PC-9 (cell line): ENCODE measurements at regions of chr12 and their contacts with region 1.

Region 1: DNA sequence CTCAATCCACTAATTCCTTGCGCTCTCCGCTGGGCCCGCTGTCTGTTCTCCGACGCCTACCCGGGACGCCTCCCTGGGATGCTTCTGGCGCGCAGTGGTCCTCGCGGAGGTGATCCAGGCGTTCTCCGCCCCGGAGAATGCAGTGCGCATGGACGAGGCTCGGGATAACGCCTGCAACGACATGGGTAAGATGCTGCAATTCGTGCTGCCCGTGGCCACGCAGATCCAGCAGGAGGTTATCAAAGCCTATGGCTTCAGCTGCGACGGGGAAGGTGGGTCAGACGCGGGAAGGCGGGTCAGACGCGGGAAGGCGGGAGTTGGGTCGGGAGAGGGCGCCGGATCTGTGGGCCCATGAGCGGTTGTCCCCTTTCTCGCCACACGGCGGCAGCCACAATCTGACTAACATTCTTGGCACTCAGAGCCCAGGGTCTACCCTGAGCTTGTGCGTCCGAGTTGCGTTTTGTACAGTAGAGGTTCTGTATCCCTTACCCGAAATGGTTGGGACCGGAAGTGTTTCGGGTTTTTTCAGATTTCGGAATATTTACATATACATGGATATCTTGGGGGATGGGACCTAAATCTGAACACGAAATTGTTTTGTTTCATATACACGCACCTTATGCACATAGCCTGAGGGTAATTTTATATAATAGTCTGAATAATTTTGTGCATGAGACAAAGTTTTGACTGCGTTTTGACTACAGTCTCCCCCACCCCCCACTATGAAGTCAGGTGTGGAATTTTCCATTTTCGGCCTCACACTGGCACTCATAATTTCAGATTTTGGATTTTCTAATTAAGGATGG is 762 bp downstream of the C12orf57 start:
- DNase-seq: peak; percentile 90 to 97
- H3K4me3 ChIP-seq: peak overlapping the region; percentile 67
- H3K27ac ChIP-seq: peak overlapping the region; percentile 94
- H3K4me1 ChIP-seq: peaks cover 20% of the 10 kb centered on the region
- H3K27me3 ChIP-seq: no peaks in the 10 kb centered on the region
- CTCF ChIP-seq: peak; percentile 88

Region 2: GRCh38 chr12:6104027-6104426 is 840.6 kb before region 1 on chr12:
- CTCF ChIA-PET with region 1: no interaction called
- POLR2A ChIA-PET with region 1: interaction called, 16 read pairs
- intact Hi-C with region 1: no loop called
- DNase-seq: no peak
- H3K4me3 ChIP-seq: no peak overlapping the region
- H3K27ac ChIP-seq: no peak overlapping the region
- H3K4me1 ChIP-seq: no peaks in the 10 kb centered on the region
- H3K27me3 ChIP-seq: no peaks in the 10 kb centered on the region
- CTCF ChIP-seq: no peak

Region 3: DNA sequence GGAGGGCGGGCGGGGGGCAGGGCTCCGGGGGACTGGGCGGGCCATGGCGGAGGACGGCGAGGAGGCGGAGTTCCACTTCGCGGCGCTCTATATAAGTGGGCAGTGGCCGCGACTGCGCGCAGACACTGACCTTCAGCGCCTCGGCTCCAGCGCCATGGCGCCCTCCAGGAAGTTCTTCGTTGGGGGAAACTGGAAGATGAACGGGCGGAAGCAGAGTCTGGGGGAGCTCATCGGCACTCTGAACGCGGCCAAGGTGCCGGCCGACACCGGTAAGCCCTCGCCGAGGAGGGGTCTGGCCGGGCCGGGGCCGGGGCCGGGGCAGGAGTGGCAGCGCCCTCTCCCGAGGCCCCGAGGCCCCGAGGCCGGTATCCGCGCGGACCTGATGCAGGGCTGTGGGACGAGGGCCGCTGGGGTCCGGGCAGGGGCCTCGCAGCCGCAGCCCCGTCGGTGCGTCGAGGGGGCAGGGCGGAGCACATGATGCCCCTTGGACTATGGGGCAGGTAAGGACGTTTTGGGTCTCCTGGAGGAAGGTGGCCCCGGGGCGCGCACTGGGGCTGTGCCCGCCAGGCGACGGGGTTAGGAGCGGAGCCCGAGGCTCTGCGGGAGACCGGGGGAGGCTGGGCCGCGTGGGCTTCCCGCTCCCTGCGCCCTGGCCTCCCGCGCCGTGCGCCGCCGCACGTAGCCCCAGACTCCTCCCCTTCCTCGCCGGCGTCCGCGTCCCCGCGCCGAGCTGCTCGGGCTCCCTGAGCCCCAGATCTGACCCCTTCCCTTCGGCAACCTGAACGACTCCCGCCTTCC is 77.0 kb before region 1 on chr12 and contains the start of gene TPI1:
- CTCF ChIA-PET with region 1: interaction called, 21 read pairs
- POLR2A ChIA-PET with region 1: interaction called, 20 read pairs
- intact Hi-C with region 1: loop called (anchors 1 kb)
- DNase-seq: peak; percentile 46 to 82
- H3K4me3 ChIP-seq: peak within 1 kb of the TSS; percentile 97
- H3K27ac ChIP-seq: peak within 1 kb of the TSS; percentile 72
- H3K4me1 ChIP-seq: peaks cover 32% of the 10 kb centered on the region
- H3K27me3 ChIP-seq: no peaks in the 10 kb centered on the region
- CTCF ChIP-seq: no peak; the same call in 1 of the 2 replicates
- total RNA-seq, gene TPI1: 1,080 and 1,199 TPM in 2 replicates

Region 4: DNA sequence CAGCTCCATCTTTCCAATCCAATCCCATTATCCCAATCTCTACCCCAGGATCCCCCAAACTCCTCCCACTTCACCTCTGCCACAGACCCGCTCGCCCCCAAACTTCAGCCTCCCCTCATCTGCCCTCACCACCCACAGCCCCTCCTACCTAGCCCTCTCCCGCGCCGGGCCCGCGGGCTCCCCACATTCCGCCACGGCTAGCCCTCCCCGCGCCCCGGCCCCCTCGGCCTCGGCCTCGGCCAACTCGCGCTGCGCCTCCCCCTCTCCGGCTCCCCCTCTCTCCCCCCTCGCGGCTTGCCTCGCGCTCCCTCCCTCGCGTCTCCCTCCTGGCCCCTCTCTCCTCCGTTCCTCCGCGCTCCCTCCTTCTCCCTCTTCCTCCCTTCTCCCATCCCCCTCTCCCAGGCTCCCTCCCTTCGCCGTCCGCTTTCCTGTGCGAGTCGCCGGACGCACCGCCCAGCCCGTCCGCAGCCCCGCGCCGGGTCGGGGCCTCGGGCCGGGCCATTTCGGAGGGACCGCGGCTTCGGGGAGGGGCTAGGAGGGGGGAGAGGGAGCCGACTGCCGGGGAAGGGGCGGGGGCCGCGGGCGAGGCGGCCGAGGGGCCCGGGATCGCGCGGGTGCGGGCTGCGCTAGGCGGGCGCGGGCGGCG is 17.1 kb before region 1 on chr12 and contains the start of gene ATN1:
- CTCF ChIA-PET with region 1: interaction called, 38 read pairs
- POLR2A ChIA-PET with region 1: interaction called, 31 read pairs
- intact Hi-C with region 1: loop called (anchors 1 kb)
- DNase-seq: peak in 1 of 2 experiments; percentile 66
- H3K4me3 ChIP-seq: peak within 1 kb of the TSS; percentile 85
- H3K27ac ChIP-seq: peak within 1 kb of the TSS; percentile 75
- H3K4me1 ChIP-seq: peaks cover 53% of the 10 kb centered on the region
- H3K27me3 ChIP-seq: no peaks in the 10 kb centered on the region
- CTCF ChIP-seq: no peak
- total RNA-seq, gene ATN1: 158 and 159 TPM in 2 replicates

Region 5: DNA sequence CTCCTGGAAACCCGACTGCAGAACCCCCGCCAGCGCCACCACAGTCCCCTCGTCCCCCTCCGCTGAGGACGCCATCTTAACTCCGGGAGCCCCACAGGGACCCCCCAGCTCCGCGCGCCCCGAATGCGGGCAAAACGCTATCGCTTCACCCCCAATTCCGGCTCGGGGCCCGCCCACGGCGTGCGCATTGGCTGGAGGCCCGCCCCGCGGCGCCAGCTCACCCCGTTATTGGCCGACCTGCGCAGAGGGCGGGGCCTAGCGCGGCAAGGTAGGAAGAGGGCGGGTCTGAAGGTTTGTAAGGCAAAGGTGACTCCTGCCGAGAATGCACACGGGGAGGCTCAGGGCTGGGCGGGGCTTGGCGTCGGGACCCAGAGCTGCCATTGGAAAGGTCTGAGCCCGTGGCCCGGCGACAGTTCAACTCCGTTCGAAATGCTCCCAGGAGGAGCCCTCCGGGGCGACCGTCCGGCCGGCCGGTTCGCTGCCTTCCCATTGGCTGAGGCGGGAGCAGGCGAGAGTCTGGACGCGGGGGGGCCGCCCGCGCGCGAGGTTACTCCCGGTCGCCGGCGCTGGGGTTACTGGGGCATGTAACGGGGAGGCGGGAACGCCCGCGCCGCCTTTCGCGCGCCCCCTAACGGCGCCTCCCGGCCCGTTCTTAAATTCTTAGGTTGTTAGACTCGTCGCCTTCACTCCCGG is 73.9 kb after region 1 on chr12 and contains the start of gene LPCAT3:
- CTCF ChIA-PET with region 1: interaction called, 9 read pairs
- POLR2A ChIA-PET with region 1: interaction called, 19 read pairs
- intact Hi-C with region 1: loop called (anchors 1 kb)
- DNase-seq: peak; percentile 96 to 100
- H3K4me3 ChIP-seq: peak within 1 kb of the TSS; percentile 79
- H3K27ac ChIP-seq: peak within 1 kb of the TSS; percentile 74
- H3K4me1 ChIP-seq: peaks cover 37% of the 10 kb centered on the region
- H3K27me3 ChIP-seq: no peaks in the 10 kb centered on the region
- CTCF ChIP-seq: peak; percentile 83
- total RNA-seq, gene LPCAT3: 53.8 and 102 TPM in 2 replicates

Region 6: DNA sequence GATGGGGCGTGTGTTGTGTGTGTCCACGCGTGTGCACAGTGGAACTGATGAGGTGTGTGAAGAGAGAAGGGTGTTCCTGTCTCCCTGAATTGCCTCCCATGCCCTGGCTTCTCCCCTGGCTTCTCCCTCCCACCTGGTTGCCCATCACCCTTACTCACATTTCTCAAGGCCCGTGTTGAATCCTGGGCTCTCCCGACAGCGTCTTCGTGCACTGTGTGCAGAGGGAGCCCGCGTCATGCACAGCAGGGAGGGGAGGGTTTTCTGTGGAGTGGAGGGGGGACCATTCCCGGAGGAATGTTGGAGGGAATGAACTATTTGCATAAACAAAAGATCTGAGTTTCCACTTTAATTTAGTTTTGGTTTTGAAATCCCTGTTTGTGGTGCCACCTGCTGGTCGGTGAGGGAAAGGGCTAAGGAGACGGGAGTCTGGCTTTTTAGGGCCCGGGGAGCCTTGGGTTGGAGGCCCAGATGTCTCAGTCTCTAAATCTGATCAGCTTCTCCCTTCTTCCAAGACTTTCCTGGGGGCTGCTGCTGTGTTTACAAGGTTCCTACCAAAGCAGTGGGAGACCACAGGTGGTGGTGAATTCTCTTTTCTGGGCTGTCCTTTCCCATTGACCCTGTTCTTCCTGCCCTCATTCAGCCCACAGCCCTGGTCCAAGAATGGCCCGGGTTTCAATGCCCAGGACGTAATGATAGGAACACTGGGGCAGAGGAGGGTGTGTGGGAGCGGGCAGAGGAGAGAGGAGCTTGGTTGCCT is 147.8 kb after region 1 on chr12 and contains the start of gene C1R:
- CTCF ChIA-PET with region 1: interaction called, 4 read pairs
- POLR2A ChIA-PET with region 1: interaction called, 19 read pairs
- intact Hi-C with region 1: loop called (anchors 1 kb)
- DNase-seq: peak in 1 of 2 experiments; percentile 76
- H3K4me3 ChIP-seq: peak within 1 kb of the TSS; percentile 41; the same call in 1 of the 2 replicates
- H3K27ac ChIP-seq: no peak within 1 kb of the TSS
- H3K4me1 ChIP-seq: no peaks in the 10 kb centered on the region
- H3K27me3 ChIP-seq: no peaks in the 10 kb centered on the region
- CTCF ChIP-seq: peak; percentile 93
- total RNA-seq, gene C1R: 20.5 and 24.0 TPM in 2 replicates

Region 7: DNA sequence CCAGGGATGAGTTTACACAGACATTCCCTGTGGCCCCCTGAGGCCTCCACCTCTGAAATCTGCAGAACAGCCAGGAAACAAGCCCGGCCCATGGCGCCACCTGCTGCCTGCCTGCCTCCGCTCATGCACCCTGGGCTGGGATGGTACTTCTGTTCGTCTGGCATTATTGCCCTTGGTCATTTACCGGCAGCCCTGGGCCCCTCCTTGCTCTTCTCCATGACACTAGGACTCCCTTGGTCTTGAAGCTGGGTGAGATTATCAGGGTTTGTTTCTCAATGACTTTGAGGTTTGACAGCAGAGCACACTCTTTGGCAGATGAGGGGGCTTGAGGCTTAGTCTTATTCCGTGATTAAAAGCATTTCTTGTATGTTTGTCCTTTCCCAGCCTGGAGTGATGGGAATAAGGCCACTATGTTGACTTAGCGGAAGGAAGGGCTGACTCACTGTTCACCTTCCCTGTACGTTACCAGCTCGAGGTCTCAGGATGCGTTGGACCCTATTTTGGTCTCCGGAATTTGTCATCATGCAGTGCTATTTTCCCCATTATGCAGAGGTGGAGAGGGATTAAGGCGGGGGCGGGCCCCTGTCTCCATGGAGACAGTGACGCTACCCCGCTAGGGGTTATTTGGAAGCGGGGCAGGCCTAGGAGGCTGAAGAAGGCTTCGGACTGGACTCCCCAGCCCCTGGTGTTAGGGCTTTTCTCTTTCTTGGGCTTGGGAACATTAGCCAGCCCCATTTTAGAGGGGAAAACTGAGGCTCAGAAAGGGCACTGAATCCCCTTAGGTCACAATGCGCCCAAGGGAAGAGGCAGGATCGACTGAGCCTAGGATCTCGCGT is 244.2 kb after region 1 on chr12:
- CTCF ChIA-PET with region 1: no interaction called
- POLR2A ChIA-PET with region 1: no interaction called
- intact Hi-C with region 1: loop called (anchors 1 kb)
- DNase-seq: peak; percentile 64 to 86
- H3K4me3 ChIP-seq: peak overlapping the region; percentile 73
- H3K27ac ChIP-seq: peak overlapping the region; percentile 48
- H3K4me1 ChIP-seq: peaks cover 23% of the 10 kb centered on the region
- H3K27me3 ChIP-seq: no peaks in the 10 kb centered on the region; the same call in 1 of the 2 replicates
- CTCF ChIP-seq: peak; percentile 81